Posterior cingulate gyrus (tissue), 11 donors: ENCODE measurements at regions of chr13 and their contacts with region 1.

Region 1: DNA sequence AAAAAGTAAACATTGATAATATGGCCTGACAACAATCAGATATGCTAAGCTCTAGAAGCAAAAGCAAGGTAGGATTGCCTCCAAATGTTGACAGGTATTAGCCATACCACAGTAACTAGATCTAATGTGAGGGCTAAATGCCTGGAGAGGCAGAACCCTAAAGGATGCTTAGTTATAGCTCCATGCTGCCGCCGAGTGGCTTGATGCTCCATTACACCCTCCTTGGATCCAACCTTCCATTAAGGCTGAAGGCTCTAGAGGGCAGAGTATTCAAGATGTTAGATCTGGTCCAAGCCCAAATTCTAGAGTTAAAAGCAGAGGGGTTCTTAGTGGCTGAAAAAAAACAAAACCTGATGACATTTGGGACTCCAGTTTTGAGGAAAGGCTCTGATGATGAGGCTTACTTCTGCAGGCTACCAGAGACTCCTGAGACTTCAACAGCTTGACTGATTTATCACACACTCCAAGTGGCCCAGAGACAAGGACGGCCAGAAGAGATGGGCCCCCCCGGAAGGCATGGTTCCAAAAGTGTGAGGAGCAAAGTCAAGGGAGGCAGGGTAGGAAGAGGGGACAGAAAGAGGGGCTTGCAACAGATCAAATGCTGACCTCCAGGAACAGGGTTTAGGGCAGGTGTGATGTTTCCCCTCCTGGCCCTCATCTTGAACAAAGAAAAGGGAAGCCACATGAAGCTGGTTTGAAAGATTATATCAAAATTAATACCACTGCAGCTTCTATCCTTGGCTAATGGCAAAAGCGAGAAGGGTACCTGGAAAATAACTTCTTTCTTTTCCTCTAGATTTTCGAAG is 21.9 kb upstream of the CPB2 start:
- DNase-seq: peak; percentile 62 to 96 (median 82)

Region 2: GRCh38 chr13:45807520-45808099 is 319.1 kb before region 1 on chr13:
- intact Hi-C with region 1: loop called (anchors 1 kb)
- DNase-seq: peak in 4 of 10 donors; percentile 26 to 55 (median 30)

Region 3: DNA sequence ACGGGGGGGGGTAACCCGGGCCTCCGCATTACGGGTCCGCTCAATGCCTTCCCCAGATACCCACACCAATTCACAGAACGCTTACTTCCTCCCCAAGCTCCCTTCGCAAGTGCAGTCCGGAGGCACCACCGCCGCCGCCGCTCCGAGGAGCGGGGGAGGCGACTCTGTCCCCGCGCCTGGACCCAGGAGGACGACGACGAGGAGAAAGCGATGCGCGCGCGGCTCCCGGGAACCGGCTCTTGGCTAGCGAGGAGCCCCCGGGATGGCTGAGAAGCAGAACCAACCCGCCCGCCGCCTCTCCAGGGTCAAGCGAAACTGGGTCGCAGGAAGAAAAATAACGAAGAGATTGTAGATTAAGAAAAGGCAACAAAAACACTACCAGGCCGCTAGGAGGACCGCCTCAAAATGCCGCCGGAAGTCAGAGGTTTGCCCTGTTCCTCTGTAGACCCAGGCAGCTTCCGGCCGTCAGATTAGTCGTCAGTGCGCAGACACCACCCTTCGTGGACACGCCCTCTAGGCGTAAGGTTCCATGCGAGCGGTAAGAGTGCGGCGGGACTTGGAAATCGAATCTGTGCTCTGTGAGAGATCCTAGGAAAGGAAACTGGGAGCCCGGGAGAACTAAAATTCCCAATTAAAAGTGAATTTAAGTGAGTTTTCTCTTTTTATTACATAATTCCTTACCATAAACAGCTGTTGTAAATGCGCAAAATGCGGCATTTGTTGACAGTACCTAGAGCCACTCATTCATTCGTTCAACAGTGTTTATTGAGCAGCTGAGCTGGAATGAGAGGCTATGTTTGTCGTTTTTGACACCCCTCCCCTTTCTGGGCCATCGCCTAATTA is 74.2 kb before region 1 on chr13 and contains the start of gene ZC3H13:
- intact Hi-C with region 1: loop called (anchors 5 kb)
- DNase-seq: peak; percentile 93 to 99 (median 96)